PC-3 (cell line): ENCODE measurements at regions of chrX and their contacts with region 1.

Region 1: DNA sequence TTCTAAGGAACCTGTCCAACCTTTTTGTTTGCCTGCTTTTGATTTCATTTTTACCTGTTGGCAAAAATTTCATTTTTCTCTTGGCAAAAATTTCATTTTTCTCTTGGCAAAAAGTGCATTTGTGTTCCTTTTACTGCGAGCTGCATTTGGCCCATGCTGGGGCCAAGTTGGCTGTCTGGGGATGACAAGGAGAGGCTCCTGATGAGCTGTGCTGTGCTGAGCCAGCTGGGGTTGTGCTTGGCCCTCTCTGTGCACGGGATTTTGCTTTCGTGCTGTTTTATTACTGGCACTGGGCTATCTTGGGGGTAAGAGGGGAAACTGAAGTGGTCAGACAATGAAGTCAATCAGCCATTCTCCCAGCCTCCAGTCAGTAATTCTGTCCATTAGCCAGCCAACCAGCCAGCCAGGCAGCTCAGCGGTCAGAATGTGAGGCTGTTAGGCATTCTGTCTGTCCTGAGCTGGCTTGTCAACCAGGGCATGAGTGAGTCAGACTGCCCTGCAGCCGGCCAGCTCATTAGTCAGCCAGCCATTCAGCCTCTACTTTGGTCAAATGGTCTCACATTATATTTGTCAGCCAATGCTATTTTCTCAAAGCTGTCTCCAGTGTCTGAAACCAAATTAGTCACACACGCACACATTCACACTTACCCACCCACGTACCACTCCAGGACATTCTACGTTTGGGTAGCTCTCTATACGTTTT is 56.9 kb upstream of the PRPS1 start:
- DNase-seq: peak; percentile 88
- ATAC-seq: peak; percentile 86
- H3K4me3 ChIP-seq: peak overlapping the region; percentile 28; the same call in 1 of the 2 replicates
- H3K27ac ChIP-seq: peak overlapping the region; percentile 95
- H3K4me1 ChIP-seq: peaks cover 40% of the 10 kb centered on the region
- H3K27me3 ChIP-seq: no peaks in the 10 kb centered on the region
- CTCF ChIP-seq: no peak

Region 2: GRCh38 chrX:107355533-107355932 is 215.9 kb before region 1 on chrX:
- CTCF ChIA-PET with region 1: no interaction called
- POLR2A ChIA-PET with region 1: no interaction called
- intact Hi-C with region 1: no loop called
- DNase-seq: no peak
- ATAC-seq: no peak
- H3K4me3 ChIP-seq: no peak overlapping the region
- H3K27ac ChIP-seq: no peak overlapping the region
- H3K4me1 ChIP-seq: no peaks in the 10 kb centered on the region
- H3K27me3 ChIP-seq: peaks cover 23% of the 10 kb centered on the region
- CTCF ChIP-seq: no peak

Region 3: GRCh38 chrX:107522901-107523300 is 48.5 kb before region 1 on chrX:
- CTCF ChIA-PET with region 1: no interaction called
- POLR2A ChIA-PET with region 1: no interaction called
- intact Hi-C with region 1: no loop called
- DNase-seq: no peak
- ATAC-seq: no peak
- H3K4me3 ChIP-seq: no peak overlapping the region
- H3K27ac ChIP-seq: no peak overlapping the region
- H3K4me1 ChIP-seq: no peaks in the 10 kb centered on the region
- H3K27me3 ChIP-seq: no peaks in the 10 kb centered on the region
- CTCF ChIP-seq: no peak

Region 4: GRCh38 chrX:107596651-107597050 is 25.2 kb after region 1 on chrX:
- CTCF ChIA-PET with region 1: no interaction called
- POLR2A ChIA-PET with region 1: no interaction called
- intact Hi-C with region 1: loop called (anchors 2 kb)
- DNase-seq: peak; percentile 79
- ATAC-seq: peak; percentile 85
- H3K4me3 ChIP-seq: no peak overlapping the region
- H3K27ac ChIP-seq: peak overlapping the region; percentile 62
- H3K4me1 ChIP-seq: peaks cover 20% of the 10 kb centered on the region
- H3K27me3 ChIP-seq: no peaks in the 10 kb centered on the region
- CTCF ChIP-seq: no peak

Region 5: DNA sequence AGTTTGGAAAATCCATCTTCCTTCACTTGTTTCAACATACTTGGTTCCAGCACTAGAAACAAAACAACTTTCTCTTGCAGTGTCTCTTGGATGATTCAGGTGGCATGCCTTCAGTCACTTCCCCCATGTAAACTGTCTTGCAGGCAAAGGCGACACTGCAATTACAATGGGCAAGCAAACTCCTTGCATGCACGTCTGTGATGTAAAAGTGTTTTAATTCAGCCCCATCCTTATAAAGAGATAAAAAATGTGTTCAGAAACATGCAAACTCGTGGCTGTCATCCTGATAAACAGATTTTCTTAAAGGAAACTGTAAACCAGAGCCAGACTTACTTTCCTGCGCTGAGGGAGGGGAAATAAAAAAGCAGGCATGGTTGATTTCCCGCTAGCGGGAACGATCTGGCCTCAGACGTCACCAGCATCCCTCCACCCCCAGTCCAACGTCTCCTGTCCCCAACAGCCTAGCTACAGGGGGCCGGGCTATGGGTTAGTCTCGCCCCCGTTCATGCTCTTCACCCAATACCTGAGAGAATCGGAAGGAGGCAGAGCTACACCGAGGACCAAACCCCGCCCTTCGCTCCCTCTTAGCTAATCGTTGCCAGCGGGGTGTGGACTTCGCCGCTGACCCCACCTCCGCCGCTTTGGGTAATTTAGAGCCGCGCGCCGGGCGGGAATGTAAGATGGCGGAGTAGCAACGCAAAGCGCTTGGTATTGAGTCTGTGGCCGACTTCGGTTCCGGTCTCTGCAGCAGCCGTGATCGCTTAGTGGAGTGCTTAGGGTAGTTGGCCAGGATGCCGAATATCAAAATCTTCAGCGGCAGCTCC is 56.6 kb after region 1 on chrX and contains the start of gene PRPS1:
- CTCF ChIA-PET with region 1: no interaction called
- POLR2A ChIA-PET with region 1: interaction called, 11 read pairs
- intact Hi-C with region 1: loop called (anchors 1 kb)
- DNase-seq: peak; percentile 96
- ATAC-seq: peak; percentile 94
- H3K4me3 ChIP-seq: peak within 1 kb of the TSS; percentile 89
- H3K27ac ChIP-seq: peak within 1 kb of the TSS; percentile 82
- H3K4me1 ChIP-seq: peaks cover 37% of the 10 kb centered on the region
- H3K27me3 ChIP-seq: no peaks in the 10 kb centered on the region
- CTCF ChIP-seq: no peak
- total RNA-seq, gene PRPS1: 57.0 and 70.8 TPM in 2 replicates